ENCODE measurements at regions of chr13 and their contacts with region 1.

Region 1: DNA sequence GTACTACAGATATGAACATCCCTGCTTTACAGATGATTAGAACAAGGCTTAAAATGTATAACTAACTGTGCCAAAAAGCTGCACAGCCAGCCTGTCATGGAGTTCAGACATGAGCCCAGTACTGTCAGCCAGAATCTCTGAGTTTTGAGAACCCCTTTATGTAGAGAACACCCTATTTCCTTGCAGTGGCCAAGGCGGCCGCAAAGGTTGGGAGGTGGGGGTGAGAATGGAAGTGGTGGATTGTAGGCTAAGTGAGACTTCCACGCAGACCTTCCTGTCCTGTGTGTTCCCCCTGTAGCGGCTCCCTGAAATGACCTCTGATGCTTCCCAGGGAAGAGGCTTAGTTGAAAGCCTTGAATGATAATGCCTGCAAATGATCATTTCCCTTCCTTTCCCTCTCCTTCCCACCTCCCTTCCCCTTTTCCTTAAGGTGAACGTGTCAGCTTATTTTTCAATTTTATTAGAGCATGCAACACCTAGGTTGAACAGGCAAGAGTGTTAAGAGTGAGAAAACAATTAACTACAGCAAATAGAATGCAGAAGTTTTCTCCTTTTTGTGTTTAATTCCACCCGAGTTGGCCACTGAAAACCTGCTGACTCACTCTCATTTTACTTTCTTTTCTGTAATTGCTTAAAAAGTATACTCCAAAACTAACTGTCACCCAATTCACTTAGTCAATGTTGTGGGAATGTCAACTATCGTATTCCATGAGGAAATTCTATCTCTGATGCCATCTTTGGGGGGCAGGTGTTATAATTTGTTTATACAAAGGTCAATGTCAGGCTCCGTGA is 167.0 kb upstream of the EDNRB start:
- DNase-seq: no peak
- H3K4me3 ChIP-seq: no peak overlapping the region
- H3K27ac ChIP-seq: no peak overlapping the region
- H3K4me1 ChIP-seq: no peaks in the 10 kb centered on the region
- H3K27me3 ChIP-seq: no peaks in the 10 kb centered on the region
- CTCF ChIP-seq: no peak

Region 2: GRCh38 chr13:77779552-77780272 is 305.9 kb before region 1 on chr13:
- dilution Hi-C with region 1: loop called (anchors 25 kb)
- DNase-seq: peak; percentile 9
- H3K4me3 ChIP-seq: no peak overlapping the region
- H3K27ac ChIP-seq: no peak overlapping the region
- H3K4me1 ChIP-seq: no peaks in the 10 kb centered on the region
- H3K27me3 ChIP-seq: no peaks in the 10 kb centered on the region
- CTCF ChIP-seq: peak in 2 of 3 experiments; percentile 36 to 40